ENCODE measurements at regions of chr11 and their contacts with region 1.

Region 1: GRCh38 chr11:65888163-65888814 is at the start of gene FIBP:
- DNase-seq: peak; percentile 96
- ATAC-seq: peak; percentile 67
- H3K4me3 ChIP-seq: peak within 1 kb of the TSS; percentile 81
- H3K27ac ChIP-seq: peak within 1 kb of the TSS; percentile 93
- H3K4me1 ChIP-seq: peaks cover 17% of the 10 kb centered on the region
- H3K27me3 ChIP-seq: no peaks in the 10 kb centered on the region
- CTCF ChIP-seq: peak; percentile 83
- POLR2A ChIP-seq: peak; percentile 65
- RAD21 ChIP-seq: no peak; the same call in none of the 2 replicates
- total RNA-seq, gene FIBP: 119 and 182 TPM in 2 replicates

Region 2: GRCh38 chr11:65779851-65780577 is 108.3 kb before region 1 on chr11:
- CTCF ChIA-PET with region 1: no interaction called
- POLR2A ChIA-PET with region 1: interaction called, 10 read pairs
- dilution Hi-C with region 1: no loop called
- in situ Hi-C with region 1: no loop called
- intact Hi-C with region 1: no loop called
- DNase-seq: peak; percentile 67
- ATAC-seq: peak; percentile 84
- H3K4me3 ChIP-seq: peak overlapping the region; percentile 80
- H3K27ac ChIP-seq: peak overlapping the region; percentile 64
- H3K4me1 ChIP-seq: peaks cover 3% of the 10 kb centered on the region; the same call in 1 of the 2 replicates
- H3K27me3 ChIP-seq: peaks cover 19% of the 10 kb centered on the region
- CTCF ChIP-seq: peak; percentile 99
- POLR2A ChIP-seq: no peak; the same call in 1 of the 2 replicates
- RAD21 ChIP-seq: peak; percentile 69

Region 3: GRCh38 chr11:65806979-65807378 is 81.3 kb before region 1 on chr11:
- CTCF ChIA-PET with region 1: no interaction called
- POLR2A ChIA-PET with region 1: interaction called, 20 read pairs
- dilution Hi-C with region 1: no loop called
- in situ Hi-C with region 1: no loop called
- intact Hi-C with region 1: no loop called
- DNase-seq: no peak
- ATAC-seq: no peak
- H3K4me3 ChIP-seq: no peak overlapping the region
- H3K27ac ChIP-seq: no peak overlapping the region
- H3K4me1 ChIP-seq: no peaks in the 10 kb centered on the region
- H3K27me3 ChIP-seq: peaks cover 47% of the 10 kb centered on the region
- CTCF ChIP-seq: no peak
- POLR2A ChIP-seq: no peak
- RAD21 ChIP-seq: no peak

Region 4: GRCh38 chr11:65859200-65859811 is 29.0 kb before region 1 on chr11:
- CTCF ChIA-PET with region 1: interaction called, 14 read pairs
- POLR2A ChIA-PET with region 1: interaction called, 4 read pairs
- dilution Hi-C with region 1: no loop called
- in situ Hi-C with region 1: no loop called
- intact Hi-C with region 1: loop called (anchors 1 kb)
- DNase-seq: peak; percentile 98
- ATAC-seq: peak; percentile 67
- H3K4me3 ChIP-seq: peak overlapping the region; percentile 95
- H3K27ac ChIP-seq: peak overlapping the region; percentile 97
- H3K4me1 ChIP-seq: peaks cover 11% of the 10 kb centered on the region
- H3K27me3 ChIP-seq: no peaks in the 10 kb centered on the region
- CTCF ChIP-seq: no peak
- POLR2A ChIP-seq: peak; percentile 79
- RAD21 ChIP-seq: no peak

Region 5: GRCh38 chr11:65919146-65920033 is 31.1 kb after region 1 on chr11 and contains the start of gene DRAP1:
- CTCF ChIA-PET with region 1: interaction called, 9 read pairs
- POLR2A ChIA-PET with region 1: interaction called, 20 read pairs
- dilution Hi-C with region 1: no loop called
- in situ Hi-C with region 1: no loop called
- intact Hi-C with region 1: no loop called
- DNase-seq: peak; percentile 97
- ATAC-seq: peak; percentile 79
- H3K4me3 ChIP-seq: peak within 1 kb of the TSS; percentile 100
- H3K27ac ChIP-seq: peak within 1 kb of the TSS; percentile 93
- H3K4me1 ChIP-seq: peaks cover 42% of the 10 kb centered on the region
- H3K27me3 ChIP-seq: no peaks in the 10 kb centered on the region
- CTCF ChIP-seq: 0 out of 2 replicates have a peak, but pooled peaks have one; percentile 10
- POLR2A ChIP-seq: 0 out of 2 replicates have a peak, but pooled peaks have one; percentile 29
- RAD21 ChIP-seq: peak; percentile 43
- total RNA-seq, gene DRAP1: 237 and 339 TPM in 2 replicates

Region 6: GRCh38 chr11:65961232-65961901 is 73.1 kb after region 1 on chr11 and contains the start of gene SART1:
- CTCF ChIA-PET with region 1: interaction called, 3 read pairs
- POLR2A ChIA-PET with region 1: interaction called, 3 read pairs
- dilution Hi-C with region 1: no loop called
- in situ Hi-C with region 1: loop called (anchors 5 kb)
- intact Hi-C with region 1: loop called (anchors 2 kb)
- DNase-seq: peak; percentile 97
- ATAC-seq: peak; percentile 96
- H3K4me3 ChIP-seq: peak within 1 kb of the TSS; percentile 59
- H3K27ac ChIP-seq: peak within 1 kb of the TSS; percentile 98
- H3K4me1 ChIP-seq: peaks cover 8% of the 10 kb centered on the region
- H3K27me3 ChIP-seq: no peaks in the 10 kb centered on the region
- CTCF ChIP-seq: no peak
- POLR2A ChIP-seq: peak; percentile 89
- RAD21 ChIP-seq: peak; percentile 11
- total RNA-seq, gene SART1: 25.5 and 32.5 TPM in 2 replicates

Region 7: GRCh38 chr11:65988791-65989592 is 100.7 kb after region 1 on chr11:
- CTCF ChIA-PET with region 1: interaction called, 5 read pairs
- POLR2A ChIA-PET with region 1: no interaction called
- dilution Hi-C with region 1: no loop called
- in situ Hi-C with region 1: loop called (anchors 5 kb)
- intact Hi-C with region 1: loop called (anchors 1 kb)
- DNase-seq: peak; percentile 96
- ATAC-seq: peak; percentile 99
- H3K4me3 ChIP-seq: no peak overlapping the region
- H3K27ac ChIP-seq: no peak overlapping the region
- H3K4me1 ChIP-seq: no peaks in the 10 kb centered on the region
- H3K27me3 ChIP-seq: no peaks in the 10 kb centered on the region
- CTCF ChIP-seq: peak; percentile 99
- POLR2A ChIP-seq: 0 out of 2 replicates have a peak, but pooled peaks have one; percentile 52
- RAD21 ChIP-seq: peak; percentile 96